ENCODE measurements at regions of chr3 and their contacts with region 1.

Region 1: DNA sequence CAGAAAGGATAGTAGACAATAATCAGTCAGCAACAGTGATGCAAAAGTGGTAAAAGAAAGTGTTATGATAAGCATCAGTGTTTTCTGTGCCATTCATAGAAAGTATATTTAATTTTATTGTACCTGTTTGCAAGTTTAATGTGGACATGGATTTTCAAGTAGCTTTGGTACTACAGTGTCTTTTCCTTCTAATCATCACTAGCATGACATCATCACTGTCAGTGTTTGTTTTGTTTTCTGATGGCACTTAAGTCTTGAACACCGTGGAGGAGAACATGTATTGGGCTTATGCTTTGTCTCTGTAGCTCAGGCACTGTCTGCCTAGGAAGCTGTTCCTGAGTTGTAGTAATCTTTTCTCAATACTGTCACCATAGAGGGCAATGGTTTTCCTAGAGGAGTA is 41.9 kb downstream of the SETD5 start:
- DNase-seq: no peak
- CTCF ChIP-seq: no peak

Region 2: DNA sequence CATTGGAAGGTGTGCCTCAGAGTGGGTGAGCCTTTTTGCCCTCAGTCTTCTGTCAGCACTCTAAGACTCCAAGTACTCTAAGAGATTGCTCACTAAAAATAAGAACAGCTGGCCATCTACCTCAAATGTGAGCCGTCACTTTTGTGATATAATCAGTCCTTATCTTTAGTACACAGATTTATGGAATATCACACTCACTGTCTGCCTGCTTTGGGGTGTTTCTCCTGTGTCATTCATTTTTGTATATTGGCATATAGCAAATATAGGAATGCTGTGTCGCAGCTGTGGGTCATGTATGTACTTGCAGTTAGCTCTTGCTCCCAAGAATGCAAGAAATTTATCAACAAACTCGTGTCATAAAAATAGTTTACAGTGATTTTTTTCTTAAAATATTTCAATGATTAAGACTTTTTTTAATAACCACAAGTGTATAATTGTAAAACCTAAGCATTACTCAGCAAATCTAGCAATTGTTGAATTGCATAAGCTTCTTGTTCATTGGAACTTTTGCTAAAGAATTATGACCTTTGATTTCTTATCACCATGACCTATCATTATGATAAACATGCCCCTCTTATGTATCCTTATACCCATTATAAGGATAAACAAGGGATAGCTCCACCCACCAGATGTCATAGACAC is 23.1 kb before region 1 on chr3:
- CTCF ChIA-PET with region 1: no interaction called
- POLR2A ChIA-PET with region 1: no interaction called
- DNase-seq: no peak
- CTCF ChIP-seq: no peak

Region 3: GRCh38 chr3:9452417-9452816 is 13.1 kb after region 1 on chr3:
- CTCF ChIA-PET with region 1: interaction called, 12 read pairs
- POLR2A ChIA-PET with region 1: no interaction called
- DNase-seq: no peak
- CTCF ChIP-seq: no peak